B cell (primary cell): ENCODE measurements at regions of chr17 and their contacts with region 1.

Region 1: GRCh38 chr17:38351412-38352222 is at the start of gene SOCS7:
- DNase-seq: peak; percentile 94
- ATAC-seq: peak; percentile 92
- H3K4me3 ChIP-seq: peak within 1 kb of the TSS; percentile 38 to 78 (median 70)
- H3K4me3 Mint-ChIP-seq: peak within 1 kb of the TSS; percentile 99
- H3K27ac ChIP-seq: peak within 1 kb of the TSS; percentile 71 to 73
- H3K27ac Mint-ChIP-seq: peak within 1 kb of the TSS; percentile 97
- H3K4me1 ChIP-seq: peaks cover 11 to 19% of the 10 kb centered on the region in 2 donors
- H3K4me1 Mint-ChIP-seq: peaks cover 31% of the 10 kb centered on the region
- H3K27me3 ChIP-seq: no peaks in the 10 kb centered on the region
- H3K27me3 Mint-ChIP-seq: no peaks in the 10 kb centered on the region
- CTCF ChIP-seq: no peak
- total RNA-seq, gene SOCS7: 20.8 and 23.3 TPM in 2 replicates

Region 2: DNA sequence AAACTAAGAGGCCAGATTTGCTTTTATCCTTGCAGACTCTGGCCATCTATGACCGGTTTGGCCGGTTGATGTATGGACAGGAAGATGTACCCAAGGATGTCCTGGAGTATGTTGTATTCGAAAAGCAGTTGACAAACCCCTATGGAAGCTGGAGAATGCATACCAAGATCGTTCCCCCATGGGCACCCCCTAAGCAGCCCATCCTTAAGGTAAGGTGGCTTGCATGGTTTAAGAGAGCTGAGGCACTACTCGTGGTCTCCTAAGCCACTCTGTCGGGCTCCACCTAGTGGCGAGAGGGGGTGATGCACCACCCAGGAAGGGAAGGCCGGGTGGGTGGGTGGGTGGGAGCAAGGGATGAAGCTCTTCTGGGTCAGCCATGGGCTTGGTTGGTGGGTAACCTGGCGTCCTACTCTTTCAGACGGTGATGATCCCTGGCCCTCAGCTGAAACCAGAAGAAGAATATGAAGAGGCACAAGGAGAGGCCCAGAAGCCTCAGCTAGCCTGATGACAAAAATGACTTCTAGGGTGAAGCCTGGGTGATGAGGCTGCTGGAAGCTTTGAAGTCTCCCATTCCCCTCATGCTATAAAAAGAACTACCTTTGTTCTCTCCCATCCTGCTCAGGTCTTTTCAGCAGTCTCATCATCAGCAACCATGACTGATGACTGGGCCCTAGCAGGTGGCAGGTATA is 29.4 kb before region 1 on chr17:
- CTCF ChIA-PET with region 1: interaction called, 48 read pairs
- POLR2A ChIA-PET with region 1: no interaction called
- intact Hi-C with region 1: no loop called
- DNase-seq: peak; percentile 72
- ATAC-seq: peak; percentile 85
- H3K4me3 ChIP-seq: no peak overlapping the region
- H3K4me3 Mint-ChIP-seq: no peak overlapping the region
- H3K27ac ChIP-seq: no peak overlapping the region
- H3K27ac Mint-ChIP-seq: no peak overlapping the region
- H3K4me1 ChIP-seq: peaks cover 5 to 10% of the 10 kb centered on the region in 2 donors
- H3K4me1 Mint-ChIP-seq: peaks cover 18% of the 10 kb centered on the region
- H3K27me3 ChIP-seq: no peaks in the 10 kb centered on the region
- H3K27me3 Mint-ChIP-seq: no peaks in the 10 kb centered on the region
- CTCF ChIP-seq: peak; percentile 87

Region 3: GRCh38 chr17:38403491-38403890 is 51.9 kb after region 1 on chr17:
- CTCF ChIA-PET with region 1: interaction called, 15 read pairs
- POLR2A ChIA-PET with region 1: no interaction called
- intact Hi-C with region 1: no loop called
- DNase-seq: no peak
- ATAC-seq: no peak
- H3K4me3 ChIP-seq: no peak overlapping the region
- H3K4me3 Mint-ChIP-seq: no peak overlapping the region
- H3K27ac ChIP-seq: no peak overlapping the region
- H3K27ac Mint-ChIP-seq: no peak overlapping the region
- H3K4me1 ChIP-seq: no peaks in the 10 kb centered on the region
- H3K4me1 Mint-ChIP-seq: no peaks in the 10 kb centered on the region
- H3K27me3 ChIP-seq: no peaks in the 10 kb centered on the region
- H3K27me3 Mint-ChIP-seq: no peaks in the 10 kb centered on the region
- CTCF ChIP-seq: no peak

Region 4: GRCh38 chr17:38485146-38485468 is 133.5 kb after region 1 on chr17:
- CTCF ChIA-PET with region 1: interaction called, 3 read pairs
- POLR2A ChIA-PET with region 1: no interaction called
- intact Hi-C with region 1: loop called (anchors 2 kb)
- DNase-seq: no peak
- ATAC-seq: no peak
- H3K4me3 ChIP-seq: no peak overlapping the region
- H3K4me3 Mint-ChIP-seq: peak overlapping the region; percentile 82
- H3K27ac ChIP-seq: no peak overlapping the region
- H3K27ac Mint-ChIP-seq: no peak overlapping the region
- H3K4me1 ChIP-seq: peaks cover 0 to 11% of the 10 kb centered on the region in 2 donors
- H3K4me1 Mint-ChIP-seq: peaks cover 20% of the 10 kb centered on the region
- H3K27me3 ChIP-seq: no peaks in the 10 kb centered on the region
- H3K27me3 Mint-ChIP-seq: peaks cover 4% of the 10 kb centered on the region
- CTCF ChIP-seq: no peak

Region 5: DNA sequence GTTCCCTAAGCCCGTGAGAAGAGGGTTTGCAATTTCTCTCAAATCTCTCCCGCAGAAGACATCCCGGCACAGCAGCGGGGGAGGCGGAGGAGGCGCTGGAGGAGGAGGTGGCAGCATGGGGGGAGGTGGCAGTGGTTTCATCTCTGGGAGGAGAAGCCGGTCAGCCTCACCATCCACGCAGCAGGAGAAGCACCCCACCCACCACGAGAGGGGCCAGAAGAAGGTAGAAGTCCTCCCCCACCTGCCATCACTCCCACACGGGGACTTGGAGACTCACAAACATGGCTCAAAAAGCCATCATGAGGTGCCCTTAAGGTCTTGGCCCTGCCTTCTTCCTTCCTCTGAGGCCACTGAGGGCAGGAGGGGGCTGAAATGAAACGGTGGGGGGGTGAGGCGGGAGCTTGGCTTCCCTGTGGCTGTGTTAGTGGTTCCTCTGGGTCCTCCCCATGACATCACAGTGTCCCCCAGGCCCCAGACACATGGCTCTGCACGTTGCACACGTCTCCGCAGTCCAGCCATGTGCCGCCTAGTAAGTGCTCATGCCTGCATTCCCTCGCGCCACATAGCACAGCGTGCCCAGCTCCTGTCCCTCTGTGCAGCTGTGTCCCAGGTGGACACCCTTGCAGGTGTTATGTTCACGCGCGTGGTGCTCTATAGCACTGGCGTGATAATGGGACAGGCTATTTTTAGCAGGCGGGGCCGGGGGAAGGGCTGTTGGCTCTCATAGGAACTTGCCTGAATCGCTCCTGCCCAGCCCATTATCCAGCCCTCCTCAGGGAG is 360.4 kb after region 1 on chr17:
- CTCF ChIA-PET with region 1: no interaction called
- POLR2A ChIA-PET with region 1: no interaction called
- intact Hi-C with region 1: no loop called
- DNase-seq: no peak
- ATAC-seq: no peak
- H3K4me3 ChIP-seq: no peak overlapping the region
- H3K4me3 Mint-ChIP-seq: no peak overlapping the region
- H3K27ac ChIP-seq: no peak overlapping the region
- H3K27ac Mint-ChIP-seq: no peak overlapping the region
- H3K4me1 ChIP-seq: peaks cover 6 to 9% of the 10 kb centered on the region in 2 donors
- H3K4me1 Mint-ChIP-seq: peaks cover 18% of the 10 kb centered on the region
- H3K27me3 ChIP-seq: no peaks in the 10 kb centered on the region
- H3K27me3 Mint-ChIP-seq: no peaks in the 10 kb centered on the region
- CTCF ChIP-seq: no peak